Common myeloid progenitor, CD34-positive (primary cell): ENCODE measurements at regions of chr17 and their contacts with region 1.

Region 1: GRCh38 chr17:38724337-38724988 is 5.7 kb upstream of the CISD3 start:
- DNase-seq: peak; percentile 50 to 78 (median 72)
- H3K4me3 ChIP-seq: peak overlapping the region in 1 of 7 experiments; percentile 25
- H3K27ac ChIP-seq: no peak overlapping the region
- H3K4me1 ChIP-seq: peaks cover 5 to 33% (median 27%) of the 10 kb centered on the region in 4 experiments
- H3K27me3 ChIP-seq: no peaks in the 10 kb centered on the region

Region 2: GRCh38 chr17:37848690-37849616 is 875.5 kb before region 1 on chr17:
- CTCF ChIA-PET with region 1: no interaction called
- POLR2A ChIA-PET with region 1: no interaction called
- DNase-seq: peak in 2 of 3 donors; percentile 44 to 62
- H3K4me3 ChIP-seq: no peak overlapping the region
- H3K27ac ChIP-seq: no peak overlapping the region
- H3K4me1 ChIP-seq: peaks cover 3 to 27% (median 12%) of the 10 kb centered on the region in 4 experiments
- H3K27me3 ChIP-seq: no peaks in the 10 kb centered on the region

Region 3: GRCh38 chr17:38704645-38705522 is 19.6 kb before region 1 on chr17 and contains the start of gene MLLT6:
- CTCF ChIA-PET with region 1: interaction called, 18 read pairs
- POLR2A ChIA-PET with region 1: interaction called, 7 read pairs
- DNase-seq: peak; percentile 83 to 91 (median 89)
- H3K4me3 ChIP-seq: peak within 1 kb of the TSS; percentile 69 to 96 (median 86)
- H3K27ac ChIP-seq: peak within 1 kb of the TSS; percentile 72 to 86
- H3K4me1 ChIP-seq: peaks cover 4 to 65% (median 48%) of the 10 kb centered on the region in 4 experiments
- H3K27me3 ChIP-seq: no peaks in the 10 kb centered on the region

Region 4: GRCh38 chr17:38711792-38712571 is 12.5 kb before region 1 on chr17:
- CTCF ChIA-PET with region 1: interaction called, 18 read pairs
- POLR2A ChIA-PET with region 1: interaction called, 7 read pairs
- DNase-seq: peak in 2 of 3 donors; percentile 63 to 71
- H3K4me3 ChIP-seq: peak overlapping the region in 2 of 7 experiments; percentile 11 to 33
- H3K27ac ChIP-seq: no peak overlapping the region
- H3K4me1 ChIP-seq: peaks cover 0 to 39% (median 31%) of the 10 kb centered on the region in 4 experiments
- H3K27me3 ChIP-seq: no peaks in the 10 kb centered on the region